ENCODE measurements at regions of chr19 and their contacts with region 1.

Region 1: GRCh38 chr19:12610540-12611360 is at the starts of genes ZNF490 and ZNF791:
- DNase-seq: peak; percentile 96 to 97
- H3K4me3 ChIP-seq: peak within 1 kb of the TSS; percentile 94
- H3K4me3 Mint-ChIP-seq: peak within 1 kb of the TSS; percentile 96
- H3K27ac Mint-ChIP-seq: peak within 1 kb of the TSS; percentile 98
- H3K4me1 ChIP-seq: no peaks in the 10 kb centered on the region
- H3K4me1 Mint-ChIP-seq: no peaks in the 10 kb centered on the region
- H3K27me3 ChIP-seq: no peaks in the 10 kb centered on the region
- H3K27me3 Mint-ChIP-seq: no peaks in the 10 kb centered on the region
- CTCF ChIP-seq: no peak
- total RNA-seq, gene ZNF490: 6.1 and 6.3 TPM in 2 replicates
- total RNA-seq, gene ZNF791: 15.2 and 18.9 TPM in 2 replicates

Region 2: DNA sequence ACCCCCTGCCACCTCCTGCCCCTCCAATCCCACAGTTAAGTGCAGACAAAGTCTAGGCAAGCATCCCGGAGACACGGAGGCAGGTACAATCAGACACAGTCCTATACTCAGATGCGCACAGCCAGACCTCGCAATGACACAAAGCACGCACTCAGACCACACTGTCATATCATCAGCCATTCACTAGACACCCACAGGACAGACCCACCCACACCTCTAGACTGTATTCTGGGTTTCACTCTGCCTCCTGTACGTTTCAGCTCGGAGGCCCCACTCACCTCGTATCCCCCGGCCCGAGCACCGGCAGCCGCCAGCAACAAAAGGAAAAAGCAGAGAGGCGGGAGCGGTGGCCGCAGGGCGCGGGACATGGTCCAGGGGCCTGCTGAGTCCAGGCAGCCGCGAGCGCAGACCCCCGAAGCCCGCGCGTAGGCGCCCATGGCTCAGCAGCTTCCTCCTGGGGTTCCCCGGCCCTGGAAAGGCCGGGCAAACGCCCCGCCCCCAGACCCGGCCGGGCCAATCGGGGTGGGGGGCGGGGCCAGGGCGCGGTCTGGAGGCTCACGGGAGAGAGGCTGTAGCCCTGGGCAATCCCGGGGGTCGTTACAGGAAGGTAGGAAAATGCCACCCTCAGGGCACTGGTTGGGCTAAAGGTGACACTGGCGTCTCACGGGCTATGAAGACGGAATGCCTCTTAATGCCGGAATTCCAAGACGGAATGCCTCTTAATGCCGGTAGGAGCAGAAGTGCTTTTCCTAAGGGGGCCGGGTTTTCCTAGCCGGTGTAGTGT is 55.7 kb after region 1 on chr19 and contains the starts of genes MAN2B1 and WDR83:
- CTCF ChIA-PET with region 1: interaction called, 3 read pairs
- POLR2A ChIA-PET with region 1: interaction called, 3 read pairs
- intact Hi-C with region 1: loop called (anchors 1 kb)
- DNase-seq: peak; percentile 66 to 80
- H3K4me3 ChIP-seq: peak within 1 kb of the TSS; percentile 79
- H3K4me3 Mint-ChIP-seq: peak within 1 kb of the TSS; percentile 93
- H3K27ac Mint-ChIP-seq: peak within 1 kb of the TSS; percentile 94
- H3K4me1 ChIP-seq: peaks cover 12% of the 10 kb centered on the region
- H3K4me1 Mint-ChIP-seq: peaks cover 8% of the 10 kb centered on the region
- H3K27me3 ChIP-seq: no peaks in the 10 kb centered on the region
- H3K27me3 Mint-ChIP-seq: no peaks in the 10 kb centered on the region
- CTCF ChIP-seq: no peak
- total RNA-seq, gene MAN2B1: 70.5 and 88.9 TPM in 2 replicates
- total RNA-seq, gene WDR83: 17.5 and 20.4 TPM in 2 replicates